IMR-90 (cell line): ENCODE measurements at regions of chr9 and their contacts with region 1.

Region 1: GRCh38 chr9:104027295-104027694 is 66.8 kb upstream of the SMC2 start:
- DNase-seq: no peak
- ATAC-seq: no peak
- H3K4me3 ChIP-seq: no peak overlapping the region
- H3K27ac ChIP-seq: no peak overlapping the region
- H3K4me1 ChIP-seq: no peaks in the 10 kb centered on the region
- H3K27me3 ChIP-seq: no peaks in the 10 kb centered on the region
- CTCF ChIP-seq: no peak
- POLR2A ChIP-seq: no peak
- RAD21 ChIP-seq: no peak

Region 2: DNA sequence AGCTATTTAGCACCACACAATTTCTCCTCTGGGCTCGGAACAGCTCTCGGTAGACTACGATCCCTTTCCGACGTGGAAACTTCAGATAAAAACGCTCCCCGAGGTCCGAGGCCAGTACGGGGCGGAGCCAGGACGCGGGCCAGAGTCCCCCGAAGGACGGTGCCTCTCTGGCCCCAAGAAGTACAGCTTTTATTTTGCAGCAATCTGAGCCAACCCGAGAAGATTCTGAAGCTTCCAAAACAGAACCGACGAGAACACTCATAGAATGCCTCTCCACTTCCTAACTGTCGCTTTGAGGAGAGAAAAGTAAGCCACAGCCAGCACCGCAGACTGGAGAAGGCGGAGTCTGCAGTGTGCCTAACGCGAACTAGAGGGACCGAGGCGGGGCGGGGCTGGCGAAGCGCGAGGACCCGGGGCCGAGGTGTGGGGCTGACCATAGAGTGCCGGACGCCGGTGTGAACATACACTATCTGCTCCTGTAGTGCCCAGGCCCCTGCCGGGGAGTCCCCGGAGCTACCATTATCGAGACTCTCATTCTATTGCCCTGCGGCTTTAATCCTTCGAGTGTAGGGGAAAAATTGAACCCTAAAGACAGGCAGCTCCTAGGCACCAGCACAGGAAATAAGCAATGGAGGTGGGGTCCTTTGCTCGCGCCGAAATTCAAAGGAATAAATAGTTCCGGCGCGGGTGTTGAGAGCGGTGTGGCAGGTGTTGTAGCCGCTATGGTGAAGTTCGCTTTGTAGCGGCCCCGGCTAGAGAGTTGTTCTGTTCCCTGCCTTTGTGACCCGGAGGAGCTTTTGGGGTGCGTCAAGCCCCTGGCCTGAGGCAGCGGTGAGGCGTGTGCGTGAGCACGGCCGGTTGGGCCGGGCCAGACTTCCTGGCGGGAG is 66.6 kb after region 1 on chr9 and contains the start of gene SMC2:
- CTCF ChIA-PET with region 1: no interaction called
- POLR2A ChIA-PET with region 1: no interaction called
- dilution Hi-C with region 1: no loop called
- in situ Hi-C with region 1: no loop called
- intact Hi-C with region 1: loop called (anchors 1 kb)
- DNase-seq: peak; percentile 84
- ATAC-seq: peak; percentile 97
- H3K4me3 ChIP-seq: peak within 1 kb of the TSS; percentile 92
- H3K27ac ChIP-seq: peak within 1 kb of the TSS; percentile 93
- H3K4me1 ChIP-seq: peaks cover 3% of the 10 kb centered on the region
- H3K27me3 ChIP-seq: no peaks in the 10 kb centered on the region
- CTCF ChIP-seq: no peak
- POLR2A ChIP-seq: peak; percentile 81
- RAD21 ChIP-seq: no peak
- total RNA-seq, gene SMC2: 12.4 and 21.4 TPM in 2 replicates

Region 3: DNA sequence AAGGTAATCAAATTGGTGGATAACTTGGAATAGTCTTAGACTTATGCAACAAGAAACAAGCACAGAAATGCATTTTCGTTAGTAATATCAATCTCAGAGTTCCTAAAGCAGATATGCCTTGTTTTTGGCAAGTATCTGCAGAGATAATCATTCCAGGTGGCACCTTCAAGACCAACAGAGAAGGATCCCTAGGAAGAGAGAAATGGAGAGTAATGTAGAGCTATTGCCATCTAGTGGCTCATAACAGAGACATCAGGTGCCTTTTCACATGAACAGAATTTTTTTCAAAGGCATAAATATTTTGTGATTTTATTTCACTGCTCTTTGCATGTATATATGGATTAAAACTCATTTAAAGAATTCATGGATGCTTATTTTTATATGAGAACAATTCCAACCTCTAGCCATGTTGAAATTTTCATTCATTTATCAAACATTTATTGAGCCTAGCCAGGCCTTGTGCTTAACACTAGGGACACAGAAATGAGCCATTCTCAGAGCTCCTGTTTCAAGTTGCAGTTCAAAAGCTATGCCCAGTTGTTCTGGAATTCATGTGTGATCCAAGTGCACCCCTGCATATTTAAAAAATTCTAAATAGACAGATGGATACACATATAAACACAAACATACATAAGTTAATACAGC is 359.3 kb after region 1 on chr9:
- CTCF ChIA-PET with region 1: no interaction called
- POLR2A ChIA-PET with region 1: no interaction called
- dilution Hi-C with region 1: no loop called
- in situ Hi-C with region 1: loop called (anchors 25 kb)
- intact Hi-C with region 1: loop called (anchors 1 kb)
- DNase-seq: peak; percentile 20
- ATAC-seq: no peak
- H3K4me3 ChIP-seq: no peak overlapping the region
- H3K27ac ChIP-seq: no peak overlapping the region
- H3K4me1 ChIP-seq: no peaks in the 10 kb centered on the region
- H3K27me3 ChIP-seq: no peaks in the 10 kb centered on the region
- CTCF ChIP-seq: peak; percentile 66
- POLR2A ChIP-seq: no peak
- RAD21 ChIP-seq: peak; percentile 68

Region 4: DNA sequence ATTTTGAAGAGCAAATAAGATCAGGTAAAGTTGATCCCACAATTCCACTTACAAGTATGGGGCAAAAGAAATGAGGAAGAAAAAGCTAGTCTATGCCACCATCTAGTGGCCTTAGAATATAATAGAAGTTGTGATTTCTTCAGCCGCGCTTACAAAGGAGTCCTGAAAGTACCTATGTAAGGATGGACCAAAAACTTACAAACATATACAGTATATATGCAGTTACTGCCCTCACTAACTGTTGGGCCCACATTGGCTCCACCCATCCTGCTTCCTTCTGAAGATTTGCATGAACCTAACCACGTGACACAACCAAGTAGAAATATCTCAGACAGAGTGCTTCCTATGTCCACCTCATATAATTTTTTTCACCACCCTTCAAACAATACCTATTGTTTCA is 655.3 kb after region 1 on chr9:
- CTCF ChIA-PET with region 1: interaction called, 3 read pairs
- POLR2A ChIA-PET with region 1: no interaction called
- dilution Hi-C with region 1: no loop called
- in situ Hi-C with region 1: no loop called
- intact Hi-C with region 1: loop called (anchors 1 kb)
- DNase-seq: peak; percentile 51
- ATAC-seq: peak; percentile 79
- H3K4me3 ChIP-seq: no peak overlapping the region
- H3K27ac ChIP-seq: no peak overlapping the region
- H3K4me1 ChIP-seq: no peaks in the 10 kb centered on the region
- H3K27me3 ChIP-seq: no peaks in the 10 kb centered on the region
- CTCF ChIP-seq: peak; percentile 57
- POLR2A ChIP-seq: no peak
- RAD21 ChIP-seq: peak; percentile 76

Region 5: GRCh38 chr9:104747558-104748358 is 720.5 kb after region 1 on chr9 and contains the start of gene NIPSNAP3A:
- CTCF ChIA-PET with region 1: no interaction called
- POLR2A ChIA-PET with region 1: no interaction called
- dilution Hi-C with region 1: no loop called
- in situ Hi-C with region 1: no loop called
- intact Hi-C with region 1: loop called (anchors 2 kb)
- DNase-seq: peak; percentile 49
- ATAC-seq: peak; percentile 96
- H3K4me3 ChIP-seq: peak within 1 kb of the TSS; percentile 80
- H3K27ac ChIP-seq: peak within 1 kb of the TSS; percentile 83
- H3K4me1 ChIP-seq: peaks cover 2% of the 10 kb centered on the region; the same call in 1 of the 2 replicates
- H3K27me3 ChIP-seq: no peaks in the 10 kb centered on the region
- CTCF ChIP-seq: no peak
- POLR2A ChIP-seq: peak; percentile 42; the same call in 1 of the 2 replicates
- RAD21 ChIP-seq: no peak
- total RNA-seq, gene NIPSNAP3A: 32.1 and 40.0 TPM in 2 replicates